Panc1 (cell line): ENCODE measurements at regions of chr7 and their contacts with region 1.

Region 1: DNA sequence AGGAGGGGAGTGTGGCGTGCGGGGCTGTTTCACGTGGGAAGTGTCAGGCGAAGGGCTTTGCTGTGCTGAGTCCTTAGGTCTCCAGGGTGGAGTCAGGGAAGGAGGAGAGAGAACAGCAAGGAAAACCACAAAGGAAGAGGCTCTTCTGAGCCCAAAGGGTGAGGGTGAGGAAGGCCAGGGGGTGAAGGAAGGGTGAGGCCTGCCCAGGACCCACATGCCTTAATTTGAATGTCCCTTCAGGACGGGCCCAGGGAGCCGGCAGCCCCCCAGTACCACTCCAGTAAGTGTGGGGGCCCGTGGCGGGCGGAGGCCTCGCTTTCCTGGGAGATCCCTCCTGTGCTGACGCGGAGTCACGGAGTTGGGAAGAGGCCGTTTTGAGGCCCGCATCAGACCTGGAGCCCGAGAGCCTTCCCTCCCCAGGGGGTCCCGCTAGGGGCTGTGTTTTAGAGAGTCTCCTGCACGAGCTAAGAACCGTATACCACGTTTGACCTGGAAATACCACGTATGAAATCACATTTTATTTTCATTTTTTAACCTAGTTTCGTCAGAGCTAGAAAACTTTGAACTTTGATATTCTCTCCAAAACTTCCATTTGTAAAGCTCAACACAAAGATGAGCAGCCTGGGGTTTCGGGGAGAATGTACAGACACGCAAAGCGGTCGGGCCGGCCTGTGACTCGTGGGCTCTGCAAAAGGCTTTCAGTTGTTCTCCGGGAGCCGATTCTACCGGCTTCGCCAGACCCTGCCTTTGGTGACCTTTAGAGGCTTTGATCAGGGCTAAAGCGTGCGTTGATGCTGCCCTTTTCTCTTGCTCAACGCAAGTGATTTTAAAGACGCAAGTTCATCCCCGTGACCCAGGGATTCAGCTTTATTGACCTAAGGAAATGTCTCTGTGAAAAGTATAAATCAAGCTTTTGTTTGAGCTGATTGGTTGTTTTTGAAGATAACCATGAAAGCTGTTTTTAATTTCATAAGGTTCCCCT is 23.6 kb upstream of the TTYH3 start:
- DNase-seq: no peak
- ATAC-seq: no peak
- H3K4me3 ChIP-seq: no peak overlapping the region
- H3K27ac ChIP-seq: no peak overlapping the region
- H3K4me1 ChIP-seq: no peaks in the 10 kb centered on the region; the same call in 1 of the 2 replicates
- H3K27me3 ChIP-seq: no peaks in the 10 kb centered on the region
- CTCF ChIP-seq: no peak

Region 2: DNA sequence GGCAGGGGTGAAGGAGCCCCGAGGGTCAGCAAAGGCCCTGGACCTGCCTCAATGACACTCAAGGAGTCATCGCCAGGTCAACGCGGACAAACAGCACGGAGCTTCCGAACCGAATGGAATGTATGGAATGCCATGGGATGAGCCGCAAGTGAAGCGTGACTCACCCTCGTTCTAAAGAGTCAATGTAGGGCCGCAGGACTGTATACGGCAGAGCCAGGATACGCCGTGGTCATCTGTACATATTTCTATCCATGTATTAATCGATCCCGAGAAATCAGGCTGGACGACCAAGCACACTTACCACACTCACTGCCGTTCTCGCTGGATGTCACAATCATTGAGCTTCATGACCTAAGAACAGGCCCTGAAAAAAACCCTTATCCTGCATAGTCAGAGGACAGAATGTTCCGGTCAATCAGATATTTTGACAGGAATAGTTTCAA is 298.3 kb before region 1 on chr7:
- CTCF ChIA-PET with region 1: no interaction called
- POLR2A ChIA-PET with region 1: no interaction called
- in situ Hi-C with region 1: no loop called
- intact Hi-C with region 1: no loop called
- DNase-seq: no peak
- ATAC-seq: 0 out of 2 replicates have a peak, but pooled peaks have one; percentile 21
- H3K4me3 ChIP-seq: no peak overlapping the region
- H3K27ac ChIP-seq: 0 out of 2 replicates have a peak overlapping the region, but pooled peaks have one; percentile 9
- H3K4me1 ChIP-seq: peaks cover 17% of the 10 kb centered on the region
- H3K27me3 ChIP-seq: no peaks in the 10 kb centered on the region
- CTCF ChIP-seq: no peak

Region 3: DNA sequence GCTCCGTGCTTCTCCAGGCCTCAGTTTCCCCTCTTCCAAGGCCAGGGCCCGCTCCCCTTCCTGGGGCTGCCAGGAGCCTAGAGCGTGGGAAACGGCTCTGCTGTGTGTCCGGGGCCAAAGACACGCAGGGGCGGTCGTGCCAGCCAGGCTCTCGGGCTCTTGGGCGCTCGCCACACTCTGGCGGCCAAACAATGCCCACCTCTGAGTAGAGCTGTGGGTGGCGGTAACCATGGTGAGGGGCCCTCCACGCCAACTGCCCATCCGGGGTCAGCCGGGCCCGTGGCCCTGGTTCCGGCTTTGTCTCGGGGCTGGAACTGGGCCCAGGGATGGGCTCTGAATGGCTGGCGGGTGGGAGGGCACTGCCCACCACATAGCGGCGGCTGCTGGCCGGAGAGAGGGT is 148.0 kb before region 1 on chr7:
- CTCF ChIA-PET with region 1: no interaction called
- POLR2A ChIA-PET with region 1: interaction called, 11 read pairs
- in situ Hi-C with region 1: no loop called
- intact Hi-C with region 1: no loop called
- DNase-seq: no peak
- ATAC-seq: peak; percentile 9; the same call in 1 of the 2 replicates
- H3K4me3 ChIP-seq: no peak overlapping the region
- H3K27ac ChIP-seq: no peak overlapping the region
- H3K4me1 ChIP-seq: no peaks in the 10 kb centered on the region
- H3K27me3 ChIP-seq: no peaks in the 10 kb centered on the region
- CTCF ChIP-seq: no peak